AG04449 (cell line): ENCODE measurements at regions of chr14 and their contacts with region 1.

Region 1: DNA sequence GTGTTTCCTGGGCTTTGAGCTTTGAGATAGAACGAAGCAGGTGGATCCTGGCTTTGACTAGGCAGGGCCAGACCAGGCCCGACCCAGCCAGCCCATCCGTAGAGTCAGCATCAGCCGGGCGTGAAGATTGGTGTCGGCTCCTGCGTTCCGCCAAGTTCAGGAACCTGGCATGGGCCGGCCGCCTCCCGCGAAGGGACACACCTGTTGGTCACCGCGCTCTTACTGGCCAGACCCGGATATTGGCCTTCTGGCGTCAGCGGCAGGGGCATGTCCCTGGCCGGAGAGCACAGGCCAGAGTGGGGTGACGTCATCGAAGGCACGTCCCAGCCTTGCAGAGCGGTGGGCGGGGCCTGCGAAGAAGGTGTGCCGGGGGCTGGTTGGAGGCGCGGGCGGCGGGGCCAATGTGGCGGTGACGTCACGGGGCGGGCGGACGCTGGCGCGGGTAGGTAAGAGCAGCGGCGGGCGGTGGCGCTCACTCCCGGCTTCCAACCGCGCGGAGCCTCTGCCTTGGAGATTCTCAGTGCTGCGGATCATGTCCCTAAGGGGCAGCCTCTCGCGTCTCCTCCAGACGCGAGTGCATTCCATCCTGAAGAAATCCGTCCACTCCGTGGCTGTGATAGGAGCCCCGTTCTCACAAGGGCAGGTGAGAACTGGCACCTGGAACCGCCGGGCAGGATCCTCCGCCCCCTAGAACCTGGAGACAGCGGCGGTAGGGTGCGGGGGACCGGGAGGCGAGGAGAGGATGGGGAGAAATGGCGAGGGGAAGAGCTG is at the start of gene ARG2:
- DNase-seq: no peak
- H3K4me3 ChIP-seq: peak within 1 kb of the TSS; percentile 71
- CTCF ChIP-seq: peak; percentile 14

Region 2: GRCh38 chr14:67557126-67557525 is 62.5 kb before region 1 on chr14:
- CTCF ChIA-PET with region 1: no interaction called
- POLR2A ChIA-PET with region 1: no interaction called
- DNase-seq: no peak
- H3K4me3 ChIP-seq: no peak overlapping the region
- CTCF ChIP-seq: no peak

Region 3: GRCh38 chr14:67583711-67584644 is 35.7 kb before region 1 on chr14:
- CTCF ChIA-PET with region 1: interaction called, 13 read pairs
- POLR2A ChIA-PET with region 1: no interaction called
- DNase-seq: no peak
- H3K4me3 ChIP-seq: no peak overlapping the region
- CTCF ChIP-seq: peak; percentile 72

Region 4: GRCh38 chr14:67630186-67630585 is 10.6 kb after region 1 on chr14:
- CTCF ChIA-PET with region 1: interaction called, 13 read pairs
- POLR2A ChIA-PET with region 1: no interaction called
- DNase-seq: no peak
- H3K4me3 ChIP-seq: no peak overlapping the region
- CTCF ChIP-seq: no peak

Region 5: GRCh38 chr14:67650694-67651093 is 31.1 kb after region 1 on chr14:
- CTCF ChIA-PET with region 1: interaction called, 16 read pairs
- POLR2A ChIA-PET with region 1: no interaction called
- DNase-seq: no peak
- H3K4me3 ChIP-seq: no peak overlapping the region
- CTCF ChIP-seq: no peak

Region 6: GRCh38 chr14:67674481-67675169 is 55.0 kb after region 1 on chr14 and contains the start of gene VTI1B:
- CTCF ChIA-PET with region 1: interaction called, 269 read pairs
- POLR2A ChIA-PET with region 1: no interaction called
- DNase-seq: no peak
- H3K4me3 ChIP-seq: peak within 1 kb of the TSS; percentile 78
- CTCF ChIP-seq: no peak